ENCODE measurements at regions of chrX and their contacts with region 1.

Region 1: DNA sequence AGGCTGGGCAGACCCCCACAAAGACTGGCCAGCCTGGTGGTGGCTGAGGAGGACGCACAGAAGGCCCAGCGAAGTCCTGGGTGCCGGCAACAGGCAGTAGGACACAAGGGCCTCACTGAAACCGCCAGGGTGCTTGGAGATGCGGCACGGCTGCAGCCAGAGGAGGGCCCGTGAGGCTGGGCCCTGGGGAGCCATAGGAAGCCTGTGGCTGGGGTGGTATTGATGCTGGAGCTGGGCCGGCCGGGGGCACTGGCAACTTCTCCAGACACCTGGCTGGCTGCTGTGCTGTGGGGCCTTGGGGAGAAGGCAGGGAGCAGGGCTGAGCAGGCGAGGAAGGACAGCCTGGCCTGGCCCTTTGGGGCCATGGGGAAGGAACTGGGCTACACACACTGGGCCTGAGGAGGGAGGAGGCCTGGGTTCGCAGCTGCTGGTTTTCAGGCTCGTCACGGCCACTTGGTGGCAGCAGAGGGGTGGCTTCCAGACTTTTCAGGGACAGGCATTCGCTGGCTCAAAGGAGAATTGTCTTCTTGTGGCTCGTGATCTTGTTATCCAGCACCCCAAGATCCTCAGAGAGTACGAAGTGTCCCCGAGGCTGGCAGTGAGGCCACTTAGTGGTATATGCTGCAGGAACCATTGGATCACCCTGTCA is 37.2 kb downstream of the ATP2B3 start:
- DNase-seq: peak; percentile 64 to 87 (median 86)
- ATAC-seq: peak; percentile 40 to 66
- H3K4me3 ChIP-seq: no peak overlapping the region
- H3K27ac ChIP-seq: no peak overlapping the region
- H3K4me1 ChIP-seq: no peaks in the 10 kb centered on the region
- H3K27me3 ChIP-seq: no peaks in the 10 kb centered on the region

Region 2: GRCh38 chrX:153649178-153649914 is 94.7 kb after region 1 on chrX:
- intact Hi-C with region 1: loop called in 1 of 4 experiments (anchors 10 kb)
- DNase-seq: peak in 1 of 3 donors; percentile 62
- ATAC-seq: peak; percentile 40 to 64
- H3K4me3 ChIP-seq: no peak overlapping the region
- H3K27ac ChIP-seq: no peak overlapping the region
- H3K4me1 ChIP-seq: no peaks in the 10 kb centered on the region
- H3K27me3 ChIP-seq: no peaks in the 10 kb centered on the region

Region 3: DNA sequence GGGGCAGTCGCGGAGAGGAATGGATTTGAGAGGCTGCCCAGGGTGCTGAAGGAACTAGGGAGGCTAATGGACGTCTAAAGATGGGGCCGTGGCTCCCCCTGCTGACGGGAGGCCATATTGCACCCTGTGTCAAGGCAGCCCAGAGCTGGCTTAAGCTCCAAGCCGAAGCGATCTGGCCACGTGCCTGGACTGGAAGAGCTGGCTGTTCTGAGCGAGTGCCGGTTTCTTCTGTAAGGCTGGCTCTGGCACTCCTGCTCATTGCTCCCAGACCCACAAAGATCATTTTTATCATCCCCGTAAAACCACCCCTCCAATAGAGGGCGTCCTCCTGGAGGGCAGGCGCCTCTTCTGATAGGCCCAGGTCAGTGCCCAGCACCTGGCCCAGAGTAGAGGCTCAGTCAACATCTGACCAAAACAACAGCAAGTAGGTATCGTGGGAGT is 113.3 kb after region 1 on chrX:
- intact Hi-C with region 1: loop called (anchors 5 to 10 kb)
- DNase-seq: peak; percentile 86 to 96 (median 95)
- ATAC-seq: peak; percentile 83
- H3K4me3 ChIP-seq: no peak overlapping the region
- H3K27ac ChIP-seq: no peak overlapping the region
- H3K4me1 ChIP-seq: no peaks in the 10 kb centered on the region
- H3K27me3 ChIP-seq: no peaks in the 10 kb centered on the region